Activated CD4-positive, alpha-beta T cell treated with anti-CD3 and anti-CD28 coated beads for 36 hours (primary cell): ENCODE measurements at regions of chr16 and their contacts with region 1.

Region 1: DNA sequence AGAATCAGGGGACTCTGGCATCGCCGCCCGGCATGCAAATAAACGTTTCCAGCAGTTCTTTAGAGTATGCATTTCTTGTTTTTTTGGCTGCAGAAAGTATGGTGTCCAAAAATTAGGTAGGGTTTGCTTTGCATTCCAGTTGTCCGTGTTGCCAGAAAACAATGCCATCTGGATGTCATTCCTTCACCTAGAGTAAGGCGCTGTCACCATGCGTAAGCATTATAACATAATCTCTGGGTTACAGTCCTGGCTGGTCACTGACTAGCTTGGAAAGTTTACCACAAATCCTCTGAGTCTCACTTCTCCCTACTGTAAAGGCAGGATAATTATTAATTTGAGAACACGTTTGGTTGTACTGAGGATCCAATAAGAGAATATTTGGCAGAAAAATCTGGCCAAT is 457.7 kb downstream of the XYLT1 start:
- DNase-seq: no peak
- ATAC-seq: no peak
- H3K4me3 Mint-ChIP-seq: peak overlapping the region; percentile 73
- H3K27ac Mint-ChIP-seq: peak overlapping the region; percentile 84
- H3K4me1 Mint-ChIP-seq: peaks cover 16% of the 10 kb centered on the region
- H3K27me3 Mint-ChIP-seq: no peaks in the 10 kb centered on the region

Region 2: GRCh38 chr16:17026600-17027242 is 13.7 kb after region 1 on chr16:
- CTCF ChIA-PET with region 1: interaction called, 3 read pairs
- POLR2A ChIA-PET with region 1: interaction called, 3 read pairs
- intact Hi-C with region 1: loop called in 1 of 2 experiments (anchors 1 kb)
- DNase-seq: peak; percentile 68
- ATAC-seq: peak; percentile 93
- H3K4me3 Mint-ChIP-seq: no peak overlapping the region
- H3K27ac Mint-ChIP-seq: peak overlapping the region; percentile 48
- H3K4me1 Mint-ChIP-seq: peaks cover 27% of the 10 kb centered on the region
- H3K27me3 Mint-ChIP-seq: no peaks in the 10 kb centered on the region

Region 3: GRCh38 chr16:17070882-17071592 is 58.0 kb after region 1 on chr16:
- CTCF ChIA-PET with region 1: no interaction called
- POLR2A ChIA-PET with region 1: no interaction called
- intact Hi-C with region 1: loop called (anchors 5 kb)
- DNase-seq: peak; percentile 88
- ATAC-seq: peak; percentile 85
- H3K4me3 Mint-ChIP-seq: peak overlapping the region; percentile 68
- H3K27ac Mint-ChIP-seq: peak overlapping the region; percentile 72
- H3K4me1 Mint-ChIP-seq: peaks cover 19% of the 10 kb centered on the region
- H3K27me3 Mint-ChIP-seq: no peaks in the 10 kb centered on the region